ENCODE measurements at regions of chr18 and their contacts with region 1.

Region 1: DNA sequence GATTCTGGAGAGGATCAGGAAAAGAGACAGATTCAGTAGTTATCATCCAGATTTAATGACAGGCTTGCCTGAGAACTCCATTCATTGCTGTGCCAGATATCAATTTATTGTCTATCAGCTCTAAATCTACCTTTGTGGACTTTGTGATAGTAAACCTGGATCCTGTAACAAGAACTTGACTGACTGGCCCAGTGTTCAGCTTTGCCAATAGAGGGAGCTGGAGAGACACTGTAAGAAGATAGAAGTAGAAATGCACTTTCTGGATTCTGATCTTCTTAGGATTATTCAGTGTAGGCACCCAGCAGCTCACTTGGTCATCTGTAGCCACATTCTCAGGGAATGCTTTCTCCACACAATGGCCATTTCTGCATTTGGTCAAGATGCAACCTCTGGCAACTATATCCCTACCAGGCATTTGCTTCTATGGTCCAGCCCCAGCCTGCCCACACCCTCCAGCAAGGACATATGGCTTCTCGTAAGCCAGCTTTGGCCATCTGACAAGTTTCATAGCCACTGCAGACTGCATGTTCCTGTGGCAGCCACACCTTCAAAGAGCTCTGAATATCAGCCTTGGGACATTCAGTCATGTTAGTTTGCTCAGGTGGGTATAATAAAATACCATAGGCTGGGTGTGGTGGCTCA is 6.1 kb upstream of the SERPINB8 start:
- DNase-seq: peak in 1 of 2 experiments; percentile 57
- ATAC-seq: peak; percentile 73 to 84; a peak in 5 of 6 replicates
- H3K4me3 ChIP-seq: no peak overlapping the region
- H3K27ac ChIP-seq: no peak overlapping the region
- H3K4me1 ChIP-seq: no peaks in the 10 kb centered on the region; the same call in 2 of the 3 replicates
- CTCF ChIP-seq: peak; percentile 60
- EP300 ChIP-seq: no peak
- POLR2A ChIP-seq: no peak
- RAD21 ChIP-seq: peak; percentile 49; a peak in 3 of 5 replicates

Region 2: DNA sequence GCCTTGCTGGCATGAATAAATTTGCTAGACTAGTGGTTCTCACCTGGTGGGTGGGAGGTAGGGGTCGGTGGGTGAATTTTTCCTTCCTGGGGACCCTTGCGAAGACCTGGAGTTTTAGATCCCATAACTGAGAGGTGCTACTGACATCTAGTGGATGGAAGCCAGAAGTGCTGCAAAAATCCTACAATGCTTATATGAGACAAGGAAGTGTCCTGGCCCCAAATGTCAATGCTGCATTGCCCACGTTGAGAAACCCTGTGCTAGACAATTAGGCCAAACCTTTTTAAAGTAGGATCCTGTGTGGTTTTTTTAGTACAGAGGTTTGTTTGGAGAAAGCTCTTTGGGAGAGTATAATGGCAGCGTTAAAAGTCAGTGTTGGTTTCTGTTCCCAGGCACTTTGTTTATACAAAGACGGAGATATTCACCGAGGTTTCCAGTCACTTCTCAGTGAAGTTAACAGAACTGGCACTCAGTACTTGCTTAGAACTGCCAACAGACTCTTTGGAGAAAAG is 15.7 kb after region 1 on chr18:
- CTCF ChIA-PET with region 1: interaction called, 12 read pairs
- POLR2A ChIA-PET with region 1: no interaction called
- DNase-seq: peak; percentile 36 to 55
- ATAC-seq: peak in 1 of 2 experiments; percentile 87; a peak in 4 of 6 replicates
- H3K4me3 ChIP-seq: no peak overlapping the region; the same call in 2 of the 3 replicates
- H3K27ac ChIP-seq: peak overlapping the region; percentile 30 to 57; a peak in 2 of 6 replicates
- H3K4me1 ChIP-seq: 0 out of 3 replicates have a peak, but pooled peaks cover 3% of the 10 kb centered on the region
- CTCF ChIP-seq: peak; percentile 70
- EP300 ChIP-seq: no peak
- POLR2A ChIP-seq: no peak
- RAD21 ChIP-seq: peak; percentile 59 to 66

Region 3: GRCh38 chr18:63994783-63995399 is 31.2 kb after region 1 on chr18:
- CTCF ChIA-PET with region 1: interaction called, 22 read pairs
- POLR2A ChIA-PET with region 1: no interaction called
- DNase-seq: peak; percentile 18 to 43
- ATAC-seq: peak; percentile 54 to 77; a peak in 4 of 6 replicates
- H3K4me3 ChIP-seq: no peak overlapping the region
- H3K27ac ChIP-seq: no peak overlapping the region
- H3K4me1 ChIP-seq: no peaks in the 10 kb centered on the region
- CTCF ChIP-seq: peak; percentile 58
- EP300 ChIP-seq: no peak
- POLR2A ChIP-seq: no peak
- RAD21 ChIP-seq: peak; percentile 47 to 60

Measured in A549 (cell line).